AG04450 (cell line): ENCODE measurements at regions of chr12 and their contacts with region 1.

Region 1: DNA sequence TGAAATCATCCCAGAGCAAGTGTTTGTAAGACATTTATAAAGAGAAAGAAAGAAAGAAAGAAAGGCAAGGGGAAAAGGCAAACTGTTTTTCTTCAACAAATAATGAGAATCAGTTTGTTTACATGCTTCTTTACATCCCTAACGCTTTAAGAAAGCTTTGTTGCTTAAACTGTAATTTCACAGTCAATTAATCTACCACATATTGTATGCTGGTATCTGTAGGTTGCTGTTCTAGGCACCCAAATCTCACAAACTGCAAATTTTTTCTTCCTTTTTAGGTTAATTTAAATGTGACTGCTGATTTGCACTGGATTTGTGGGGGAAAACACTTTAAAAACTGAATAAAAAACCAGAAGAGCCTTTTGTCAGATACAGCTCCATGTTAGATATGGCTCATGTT is 384.2 kb downstream of the ATP23 start:
- DNase-seq: no peak
- H3K4me3 ChIP-seq: no peak overlapping the region
- H3K27ac ChIP-seq: no peak overlapping the region
- H3K27me3 ChIP-seq: no peaks in the 10 kb centered on the region
- CTCF ChIP-seq: no peak

Region 2: GRCh38 chr12:57983146-57983857 is 342.3 kb before region 1 on chr12:
- CTCF ChIA-PET with region 1: interaction called, 10 read pairs
- POLR2A ChIA-PET with region 1: no interaction called
- DNase-seq: peak; percentile 32
- H3K4me3 ChIP-seq: no peak overlapping the region
- H3K27ac ChIP-seq: no peak overlapping the region
- H3K27me3 ChIP-seq: peaks cover 2% of the 10 kb centered on the region
- CTCF ChIP-seq: peak; percentile 71